Gastrocnemius medialis (tissue), 4 donors: ENCODE measurements at regions of chr19 and their contacts with region 1.

Region 1: GRCh38 chr19:44002566-44003460 is at the start of gene ZNF230:
- DNase-seq: peak; percentile 90 to 92
- ATAC-seq: peak; percentile 100
- H3K4me3 ChIP-seq: peak within 1 kb of the TSS; percentile 67 to 88 (median 80)
- H3K27ac ChIP-seq: peak within 1 kb of the TSS; percentile 70 to 78 (median 74)
- H3K4me1 ChIP-seq: peaks cover 7 to 15% of the 10 kb centered on the region in 2 donors
- H3K27me3 ChIP-seq: no peaks in the 10 kb centered on the region
- CTCF ChIP-seq: no peak
- POLR2A ChIP-seq: no peak
- total RNA-seq, gene ZNF230: 0.78 to 4.5 (median 4.5) TPM in 3 of 4 donors, not detected in the other

Region 2: GRCh38 chr19:43826787-43827754 is 175.7 kb before region 1 on chr19 and contains the start of gene ZNF283:
- in situ Hi-C with region 1: no loop called
- intact Hi-C with region 1: loop called (anchors 2 kb)
- DNase-seq: peak; percentile 79 to 85
- ATAC-seq: peak; percentile 99 to 100
- H3K4me3 ChIP-seq: peak within 1 kb of the TSS; percentile 65 to 80 (median 72)
- H3K27ac ChIP-seq: peak within 1 kb of the TSS; percentile 71 to 77 (median 72)
- H3K4me1 ChIP-seq: peaks cover 4 to 6% of the 10 kb centered on the region in 2 donors
- H3K27me3 ChIP-seq: peaks cover 0 to 1% (median 0%) of the 10 kb centered on the region in 3 donors
- CTCF ChIP-seq: no peak
- POLR2A ChIP-seq: no peak
- total RNA-seq, gene ZNF283: 1.4 to 7.3 (median 2.1) TPM

Region 3: GRCh38 chr19:43950834-43951645 is 51.8 kb before region 1 on chr19 and contains the start of gene ZNF221:
- in situ Hi-C with region 1: no loop called
- intact Hi-C with region 1: loop called (anchors 1 kb)
- DNase-seq: peak; percentile 87 to 90
- ATAC-seq: peak; percentile 100
- H3K4me3 ChIP-seq: peak within 1 kb of the TSS; percentile 70 to 97 (median 84)
- H3K27ac ChIP-seq: peak within 1 kb of the TSS; percentile 66 to 80 (median 74)
- H3K4me1 ChIP-seq: peaks cover 0 to 3% of the 10 kb centered on the region in 2 donors
- H3K27me3 ChIP-seq: no peaks in the 10 kb centered on the region
- CTCF ChIP-seq: peak in 4 of 5 experiments; percentile 19 to 48 (median 38)
- POLR2A ChIP-seq: no peak
- total RNA-seq, gene ZNF221: 0.76 to 15.3 (median 0.96) TPM

Region 4: GRCh38 chr19:44025217-44025936 is 22.6 kb after region 1 on chr19 and contains the start of gene ZNF222:
- in situ Hi-C with region 1: no loop called
- intact Hi-C with region 1: loop called (anchors 1 kb)
- DNase-seq: peak; percentile 63 to 67
- ATAC-seq: peak; percentile 91 to 96
- H3K4me3 ChIP-seq: peak within 1 kb of the TSS; percentile 62 to 86 (median 78)
- H3K27ac ChIP-seq: peak within 1 kb of the TSS; percentile 58 to 71 (median 63)
- H3K4me1 ChIP-seq: no peaks in the 10 kb centered on the region
- H3K27me3 ChIP-seq: no peaks in the 10 kb centered on the region
- CTCF ChIP-seq: no peak
- POLR2A ChIP-seq: no peak
- total RNA-seq, gene ZNF222: 0.56 to 1.6 (median 1.1) TPM

Region 5: GRCh38 chr19:44071824-44072542 is 69.2 kb after region 1 on chr19 and contains the start of gene ZNF284:
- in situ Hi-C with region 1: no loop called
- intact Hi-C with region 1: loop called (anchors 1 kb)
- DNase-seq: peak; percentile 82 to 87
- ATAC-seq: peak; percentile 100
- H3K4me3 ChIP-seq: peak within 1 kb of the TSS; percentile 60 to 83 (median 77)
- H3K27ac ChIP-seq: peak within 1 kb of the TSS; percentile 56 to 79 (median 59)
- H3K4me1 ChIP-seq: peaks cover 10 to 13% of the 10 kb centered on the region in 2 donors
- H3K27me3 ChIP-seq: no peaks in the 10 kb centered on the region
- CTCF ChIP-seq: no peak
- POLR2A ChIP-seq: peak in 1 of 2 donors; percentile 20
- total RNA-seq, gene ZNF284: 0.38 to 1.3 (median 0.63) TPM

Region 6: DNA sequence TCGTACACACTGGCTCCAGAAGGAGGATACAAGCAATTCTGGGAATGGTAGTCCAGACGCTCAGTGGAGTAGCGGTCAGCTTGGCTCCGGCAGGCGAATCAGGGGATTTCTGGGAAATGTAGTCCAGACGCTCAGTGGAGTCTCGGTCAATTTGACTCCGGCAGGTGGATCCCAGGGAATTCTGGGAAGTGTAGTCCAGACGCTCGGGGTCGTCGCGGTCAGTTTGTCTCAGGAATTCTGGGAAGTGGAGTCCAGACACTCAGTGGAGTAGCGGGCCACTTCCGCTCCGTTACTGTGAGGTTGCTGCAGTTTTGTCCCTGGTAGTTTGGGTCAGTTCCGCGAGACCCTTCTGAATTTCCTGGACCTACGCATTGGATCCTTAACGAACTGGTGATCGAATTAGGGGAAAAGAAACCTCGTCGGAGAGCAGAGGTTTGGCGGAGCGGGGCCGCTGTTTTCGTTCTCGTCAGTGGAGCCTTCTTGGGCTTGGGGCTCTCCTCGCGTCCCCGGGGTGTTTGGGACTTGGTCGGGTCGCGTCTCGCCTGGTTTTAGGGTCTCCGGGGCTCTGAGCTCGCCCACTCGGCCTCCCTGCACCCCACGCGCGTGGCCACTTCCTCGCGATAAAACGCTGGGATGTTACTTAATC is 110.4 kb after region 1 on chr19 and contains the start of gene ZNF225:
- in situ Hi-C with region 1: loop called in 1 of 4 experiments (anchors 10 kb)
- intact Hi-C with region 1: loop called (anchors 1 kb)
- DNase-seq: peak; percentile 97 to 98
- ATAC-seq: peak; percentile 100
- H3K4me3 ChIP-seq: peak within 1 kb of the TSS; percentile 67 to 92 (median 86)
- H3K27ac ChIP-seq: peak within 1 kb of the TSS; percentile 73 to 86 (median 84)
- H3K4me1 ChIP-seq: peaks cover 14 to 18% of the 10 kb centered on the region in 2 donors
- H3K27me3 ChIP-seq: no peaks in the 10 kb centered on the region
- CTCF ChIP-seq: peak in 1 of 5 experiments; percentile 21
- POLR2A ChIP-seq: peak in 1 of 2 donors; percentile 17
- total RNA-seq, gene ZNF225: 0.75 to 1.4 (median 1.1) TPM

Region 7: DNA sequence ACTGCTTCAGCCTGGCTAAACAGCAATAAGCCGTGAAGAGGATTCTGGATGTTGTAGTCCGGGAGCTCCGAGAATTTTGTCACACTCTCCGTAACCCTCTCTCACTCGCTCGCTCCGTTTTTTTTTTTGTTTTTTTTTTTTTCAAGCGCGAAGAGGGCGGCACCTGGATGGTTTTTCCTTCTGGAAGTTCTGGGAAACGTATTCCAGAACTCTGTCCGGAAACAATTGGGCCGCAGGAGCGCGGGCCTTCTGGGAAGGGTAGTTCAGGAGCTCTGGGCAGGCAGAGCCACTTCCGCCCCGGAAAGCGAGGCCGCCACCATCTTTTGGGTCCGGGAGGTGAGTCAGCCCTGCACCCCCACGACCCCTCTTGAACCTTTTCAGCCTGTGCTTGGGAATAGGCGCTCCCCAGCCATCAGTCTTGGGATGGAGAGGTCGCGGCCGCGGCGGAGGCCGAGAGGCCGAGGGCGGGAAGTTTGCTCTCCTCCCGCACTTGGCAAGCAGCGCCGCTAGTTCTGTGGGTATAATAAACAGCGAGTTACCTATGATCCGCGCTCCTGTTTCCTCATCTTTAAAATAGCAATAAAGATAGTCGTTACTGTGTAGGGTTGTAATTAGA is 209.5 kb after region 1 on chr19 and contains the start of gene ZNF227:
- in situ Hi-C with region 1: loop called in 1 of 4 experiments (anchors 5 kb)
- intact Hi-C with region 1: loop called (anchors 1 kb)
- DNase-seq: peak; percentile 85 to 92
- ATAC-seq: peak; percentile 97 to 98
- H3K4me3 ChIP-seq: peak within 1 kb of the TSS; percentile 70 to 98 (median 81)
- H3K27ac ChIP-seq: peak within 1 kb of the TSS; percentile 87 to 91 (median 90)
- H3K4me1 ChIP-seq: peaks cover 13 to 18% of the 10 kb centered on the region in 2 donors
- H3K27me3 ChIP-seq: no peaks in the 10 kb centered on the region
- CTCF ChIP-seq: no peak
- POLR2A ChIP-seq: peak; percentile 32 to 53
- total RNA-seq, gene ZNF227: 6.8 to 17.7 (median 8.3) TPM